Activated CD4-positive, alpha-beta T cell treated with anti-CD3 and anti-CD28 coated beads for 36 hours (primary cell): ENCODE measurements at regions of chr16 and their contacts with region 1.

Region 1: DNA sequence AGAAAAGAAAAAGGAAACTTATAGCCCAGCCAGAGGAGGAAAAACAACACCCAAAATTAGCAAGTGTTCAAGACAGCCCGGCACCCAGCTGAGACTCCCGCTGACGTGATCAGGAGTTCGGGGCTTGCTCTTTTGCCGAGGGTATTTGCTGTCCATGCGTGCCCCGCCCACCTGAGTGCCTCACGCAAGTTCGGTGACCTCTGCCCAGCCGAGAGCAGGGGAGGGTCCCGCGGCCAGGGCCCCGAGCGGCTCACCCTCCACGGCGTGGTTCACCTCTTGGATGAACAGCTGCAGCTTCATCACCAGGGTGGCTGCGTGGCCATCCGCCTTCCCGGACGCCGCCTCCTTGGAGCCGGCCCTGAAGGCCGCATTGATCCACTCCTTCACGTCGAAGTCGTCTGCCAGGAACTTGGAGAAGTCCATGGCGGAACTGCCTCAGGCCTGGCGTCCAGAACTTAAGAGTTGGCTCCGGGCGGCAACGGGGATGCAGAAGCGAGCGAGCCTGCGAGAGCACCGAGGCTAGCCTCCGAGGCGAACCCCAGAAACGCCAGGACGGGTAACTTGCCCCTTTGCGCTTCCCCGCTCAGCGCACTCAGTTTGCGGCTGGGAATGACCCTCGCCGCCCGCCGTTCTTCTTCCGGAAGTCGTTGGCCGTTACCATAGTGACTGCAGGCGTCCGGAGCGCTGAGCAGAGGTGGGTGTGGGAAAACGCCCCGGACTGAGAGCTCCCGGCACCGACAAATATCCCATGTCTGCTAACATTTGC is at the start of gene COG7:
- DNase-seq: peak; percentile 92
- ATAC-seq: peak; percentile 94
- H3K4me3 Mint-ChIP-seq: peak within 1 kb of the TSS; percentile 92
- H3K27ac Mint-ChIP-seq: peak within 1 kb of the TSS; percentile 93
- H3K4me1 Mint-ChIP-seq: peaks cover 20% of the 10 kb centered on the region
- H3K27me3 Mint-ChIP-seq: no peaks in the 10 kb centered on the region
- total RNA-seq, gene COG7: 18.1 to 19.9 TPM

Region 2: GRCh38 chr16:22874394-22874793 is 578.4 kb before region 1 on chr16:
- CTCF ChIA-PET with region 1: no interaction called
- POLR2A ChIA-PET with region 1: no interaction called
- intact Hi-C with region 1: no loop called
- DNase-seq: no peak
- ATAC-seq: no peak
- H3K4me3 Mint-ChIP-seq: no peak overlapping the region
- H3K27ac Mint-ChIP-seq: no peak overlapping the region
- H3K4me1 Mint-ChIP-seq: no peaks in the 10 kb centered on the region
- H3K27me3 Mint-ChIP-seq: peaks cover 16% of the 10 kb centered on the region

Region 3: GRCh38 chr16:23510164-23510914 is 57.6 kb after region 1 on chr16 and contains the start of gene GGA2:
- CTCF ChIA-PET with region 1: interaction called, 3 read pairs
- POLR2A ChIA-PET with region 1: no interaction called
- intact Hi-C with region 1: loop called in 1 of 2 experiments (anchors 1 kb)
- DNase-seq: peak; percentile 88
- ATAC-seq: peak; percentile 87
- H3K4me3 Mint-ChIP-seq: peak within 1 kb of the TSS; percentile 89
- H3K27ac Mint-ChIP-seq: peak within 1 kb of the TSS; percentile 78
- H3K4me1 Mint-ChIP-seq: peaks cover 48% of the 10 kb centered on the region
- H3K27me3 Mint-ChIP-seq: no peaks in the 10 kb centered on the region
- total RNA-seq, gene GGA2: 86.7 to 114 TPM

Region 4: GRCh38 chr16:23678430-23679273 is 225.9 kb after region 1 on chr16 and contains the start of gene PLK1:
- CTCF ChIA-PET with region 1: no interaction called
- POLR2A ChIA-PET with region 1: no interaction called
- intact Hi-C with region 1: loop called in 1 of 2 experiments (anchors 1 kb)
- DNase-seq: peak; percentile 93
- ATAC-seq: peak; percentile 97
- H3K4me3 Mint-ChIP-seq: peak within 1 kb of the TSS; percentile 95
- H3K27ac Mint-ChIP-seq: peak within 1 kb of the TSS; percentile 60
- H3K4me1 Mint-ChIP-seq: peaks cover 16% of the 10 kb centered on the region
- H3K27me3 Mint-ChIP-seq: no peaks in the 10 kb centered on the region
- total RNA-seq, gene PLK1: 91.4 to 120 TPM